IMR-90 (cell line): ENCODE measurements at regions of chr5 and their contacts with region 1.

Region 1: GRCh38 chr5:83473346-83474163 is 2.0 kb downstream of the VCAN start:
- DNase-seq: peak; percentile 98
- ATAC-seq: peak; percentile 78
- H3K4me3 ChIP-seq: peak overlapping the region; percentile 56
- H3K27ac ChIP-seq: peak overlapping the region; percentile 82
- H3K4me1 ChIP-seq: peaks cover 3% of the 10 kb centered on the region
- H3K27me3 ChIP-seq: peaks cover under 1% of the 10 kb centered on the region
- CTCF ChIP-seq: peak; percentile 92
- POLR2A ChIP-seq: no peak
- RAD21 ChIP-seq: peak; percentile 85

Region 2: GRCh38 chr5:82312373-82312856 is 1161.1 kb before region 1 on chr5:
- CTCF ChIA-PET with region 1: no interaction called
- POLR2A ChIA-PET with region 1: no interaction called
- dilution Hi-C with region 1: no loop called
- in situ Hi-C with region 1: loop called (anchors 10 kb)
- intact Hi-C with region 1: loop called (anchors 1 kb)
- DNase-seq: peak; percentile 83
- ATAC-seq: peak; percentile 85
- H3K4me3 ChIP-seq: no peak overlapping the region
- H3K27ac ChIP-seq: no peak overlapping the region
- H3K4me1 ChIP-seq: peaks cover 6% of the 10 kb centered on the region; the same call in 1 of the 2 replicates
- H3K27me3 ChIP-seq: no peaks in the 10 kb centered on the region
- CTCF ChIP-seq: peak; percentile 98
- POLR2A ChIP-seq: peak; percentile 26; the same call in 1 of the 2 replicates
- RAD21 ChIP-seq: peak; percentile 98

Region 3: DNA sequence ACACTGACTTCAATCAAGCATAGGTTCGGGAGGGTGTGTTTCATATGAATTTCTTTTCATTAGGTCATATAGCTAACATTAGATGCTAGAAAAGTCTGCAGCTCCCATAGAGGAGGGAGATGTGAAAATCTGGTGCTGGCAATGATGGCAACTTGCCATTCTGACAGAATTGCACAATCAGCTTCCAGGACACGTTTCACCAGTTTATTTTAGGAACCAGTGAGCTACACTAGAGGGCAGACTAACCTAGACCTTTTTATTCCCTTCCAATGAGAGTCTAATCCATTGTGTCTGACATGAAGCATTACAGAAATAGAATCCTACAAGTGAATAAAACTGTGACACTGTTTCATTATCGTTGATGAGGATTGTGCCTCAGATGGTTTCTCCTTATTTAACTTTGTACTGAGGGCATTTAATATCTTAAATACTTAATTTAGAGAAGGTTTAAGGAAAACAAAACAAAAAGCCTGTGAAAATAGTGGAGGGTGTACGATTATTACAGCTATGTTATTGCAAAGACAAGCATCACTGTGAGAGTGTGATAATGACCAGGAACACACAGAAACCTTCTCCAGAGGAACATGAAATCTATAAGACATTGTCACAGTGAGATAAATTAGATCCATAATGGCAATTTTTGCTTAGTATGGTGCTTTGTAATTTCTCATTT is 832.1 kb before region 1 on chr5:
- CTCF ChIA-PET with region 1: interaction called, 4 read pairs
- POLR2A ChIA-PET with region 1: no interaction called
- dilution Hi-C with region 1: no loop called
- in situ Hi-C with region 1: no loop called
- intact Hi-C with region 1: loop called (anchors 1 kb)
- DNase-seq: peak; percentile 81
- ATAC-seq: peak; percentile 79
- H3K4me3 ChIP-seq: no peak overlapping the region
- H3K27ac ChIP-seq: no peak overlapping the region
- H3K4me1 ChIP-seq: no peaks in the 10 kb centered on the region
- H3K27me3 ChIP-seq: no peaks in the 10 kb centered on the region
- CTCF ChIP-seq: peak; percentile 79
- POLR2A ChIP-seq: no peak
- RAD21 ChIP-seq: peak; percentile 72

Region 4: DNA sequence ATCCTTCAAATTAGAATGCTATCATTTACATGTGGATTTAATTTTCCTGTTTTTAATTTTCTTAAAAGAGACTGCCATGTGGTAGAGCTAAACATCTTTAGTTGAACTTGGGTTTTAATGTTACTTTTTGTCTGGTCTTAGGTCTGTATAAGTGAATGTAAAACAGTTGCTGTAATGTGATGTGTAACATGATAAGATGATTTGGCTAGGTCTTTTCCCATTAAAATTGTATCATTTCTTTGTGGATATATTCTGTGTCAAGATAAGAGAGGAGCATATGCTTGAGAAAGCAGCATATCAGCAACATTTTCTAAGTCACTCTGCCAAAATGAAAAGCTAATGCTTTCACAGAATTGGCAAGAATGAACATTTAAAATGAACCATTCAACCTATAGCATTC is 414.8 kb before region 1 on chr5:
- CTCF ChIA-PET with region 1: no interaction called
- POLR2A ChIA-PET with region 1: no interaction called
- dilution Hi-C with region 1: no loop called
- in situ Hi-C with region 1: no loop called
- intact Hi-C with region 1: loop called (anchors 5 kb)
- DNase-seq: no peak
- ATAC-seq: no peak
- H3K4me3 ChIP-seq: no peak overlapping the region
- H3K27ac ChIP-seq: no peak overlapping the region
- H3K4me1 ChIP-seq: no peaks in the 10 kb centered on the region
- H3K27me3 ChIP-seq: no peaks in the 10 kb centered on the region
- CTCF ChIP-seq: no peak
- POLR2A ChIP-seq: no peak
- RAD21 ChIP-seq: no peak

Region 5: DNA sequence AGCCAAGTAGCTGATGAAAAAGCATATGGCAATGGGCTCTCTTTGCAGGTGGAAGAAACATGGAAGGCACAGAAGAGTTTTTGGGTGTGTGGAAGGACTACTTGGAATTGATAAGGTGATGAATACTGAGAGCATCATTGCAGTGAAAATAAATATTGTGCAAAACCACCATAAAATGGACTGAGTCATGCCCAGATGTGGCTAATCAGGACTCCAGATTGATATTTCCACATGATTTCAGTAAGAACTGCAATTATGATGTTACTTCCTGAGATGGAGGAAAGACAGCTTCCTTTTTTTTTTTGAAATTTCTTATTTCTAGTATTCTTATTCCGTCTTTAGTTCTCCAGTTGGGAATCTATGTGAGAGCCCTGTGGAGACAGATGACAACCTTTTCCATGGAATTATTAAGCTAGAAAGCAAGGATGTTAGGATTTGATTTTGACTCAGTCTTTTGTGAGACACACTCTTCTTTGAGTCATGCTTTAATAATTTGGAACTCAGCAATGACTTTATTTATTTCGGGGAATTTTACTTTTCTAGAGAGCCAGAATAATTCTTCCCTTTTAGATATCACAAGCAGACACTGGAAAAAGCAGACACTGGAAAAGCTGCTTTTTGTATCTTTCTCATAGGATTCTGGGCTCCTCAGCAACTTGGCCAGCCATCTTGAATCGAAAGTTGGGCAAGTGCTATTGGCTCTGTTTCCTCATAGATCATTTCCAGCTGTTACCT is 96.3 kb before region 1 on chr5:
- CTCF ChIA-PET with region 1: no interaction called
- POLR2A ChIA-PET with region 1: interaction called, 3 read pairs
- dilution Hi-C with region 1: no loop called
- in situ Hi-C with region 1: no loop called
- intact Hi-C with region 1: loop called (anchors 5 kb)
- DNase-seq: peak; percentile 92
- ATAC-seq: peak; percentile 50
- H3K4me3 ChIP-seq: no peak overlapping the region
- H3K27ac ChIP-seq: peak overlapping the region; percentile 16; the same call in 1 of the 2 replicates
- H3K4me1 ChIP-seq: peaks cover 3% of the 10 kb centered on the region; the same call in 1 of the 2 replicates
- H3K27me3 ChIP-seq: no peaks in the 10 kb centered on the region
- CTCF ChIP-seq: no peak
- POLR2A ChIP-seq: no peak
- RAD21 ChIP-seq: no peak

Region 6: DNA sequence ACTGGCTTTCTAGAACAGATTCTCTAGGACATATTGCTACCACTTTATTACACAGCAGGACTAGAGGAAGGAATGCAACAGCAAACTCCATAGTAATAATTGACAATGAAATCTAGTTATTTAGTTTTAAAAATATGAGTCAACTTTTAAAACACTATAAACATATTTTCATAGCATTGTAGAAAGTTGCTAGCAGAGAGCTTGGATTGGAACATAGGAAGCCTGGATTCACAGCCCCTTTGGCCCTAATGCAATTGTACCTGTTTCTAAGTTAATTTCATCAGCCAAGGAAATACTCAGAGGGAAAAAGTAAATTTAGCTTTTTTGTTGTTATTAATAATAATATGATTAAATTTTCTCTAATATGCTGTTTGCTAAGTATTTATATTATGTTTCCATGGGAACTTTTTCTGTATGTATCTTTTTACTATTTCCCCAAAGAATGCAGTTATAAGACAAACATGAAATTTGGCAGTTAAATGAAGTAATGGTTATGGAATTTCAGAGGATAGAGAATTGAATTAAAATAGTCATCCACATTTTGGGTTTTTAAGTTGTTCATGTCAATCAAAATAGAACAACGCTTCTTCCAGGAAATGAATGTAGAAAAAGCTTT is 43.6 kb after region 1 on chr5:
- CTCF ChIA-PET with region 1: no interaction called
- POLR2A ChIA-PET with region 1: no interaction called
- dilution Hi-C with region 1: no loop called
- in situ Hi-C with region 1: no loop called
- intact Hi-C with region 1: loop called (anchors 2 kb)
- DNase-seq: peak; percentile 55
- ATAC-seq: peak; percentile 68
- H3K4me3 ChIP-seq: no peak overlapping the region
- H3K27ac ChIP-seq: no peak overlapping the region
- H3K4me1 ChIP-seq: peaks cover 5% of the 10 kb centered on the region; the same call in 1 of the 2 replicates
- H3K27me3 ChIP-seq: no peaks in the 10 kb centered on the region
- CTCF ChIP-seq: peak; percentile 55
- POLR2A ChIP-seq: no peak
- RAD21 ChIP-seq: 0 out of 2 replicates have a peak, but pooled peaks have one; percentile 1

Region 7: GRCh38 chr5:83721953-83722901 is 248.7 kb after region 1 on chr5:
- CTCF ChIA-PET with region 1: no interaction called
- POLR2A ChIA-PET with region 1: no interaction called
- dilution Hi-C with region 1: no loop called
- in situ Hi-C with region 1: no loop called
- intact Hi-C with region 1: no loop called
- DNase-seq: peak; percentile 63
- ATAC-seq: peak; percentile 91
- H3K4me3 ChIP-seq: peak overlapping the region; percentile 78
- H3K27ac ChIP-seq: peak overlapping the region; percentile 56; the same call in 1 of the 2 replicates
- H3K4me1 ChIP-seq: peaks cover 2% of the 10 kb centered on the region; the same call in 1 of the 2 replicates
- H3K27me3 ChIP-seq: no peaks in the 10 kb centered on the region
- CTCF ChIP-seq: peak; percentile 79
- POLR2A ChIP-seq: no peak
- RAD21 ChIP-seq: peak; percentile 81